Caco-2 (cell line): ENCODE measurements at regions of chr6 and their contacts with region 1.

Region 1: GRCh38 chr6:28160233-28160632 is 18.6 kb downstream of the ZKSCAN8 start:
- DNase-seq: no peak
- H3K4me3 ChIP-seq: no peak overlapping the region
- H3K4me3 Mint-ChIP-seq: no peak overlapping the region
- H3K27ac Mint-ChIP-seq: no peak overlapping the region
- H3K4me1 ChIP-seq: no peaks in the 10 kb centered on the region
- H3K4me1 Mint-ChIP-seq: no peaks in the 10 kb centered on the region
- H3K27me3 ChIP-seq: no peaks in the 10 kb centered on the region
- H3K27me3 Mint-ChIP-seq: no peaks in the 10 kb centered on the region
- CTCF ChIP-seq: no peak

Region 2: DNA sequence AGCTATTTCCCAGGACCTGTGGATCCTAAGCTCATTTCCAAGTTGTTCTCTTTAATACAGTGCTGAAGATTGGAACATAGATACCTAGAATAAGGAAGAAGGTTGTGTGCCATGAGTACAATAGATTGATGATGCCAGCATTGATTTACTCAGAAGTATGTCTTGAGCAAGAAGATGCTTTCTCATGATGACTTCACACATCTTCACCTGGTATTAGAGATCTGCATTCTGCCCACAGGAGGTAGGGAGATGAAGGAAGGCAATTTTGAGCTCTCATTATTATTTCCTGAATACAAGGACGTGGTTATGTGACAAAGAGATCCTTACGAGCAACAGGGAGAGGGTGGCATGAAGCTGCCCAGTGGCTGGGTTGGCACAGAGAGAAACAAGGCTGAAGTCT is 99.8 kb before region 1 on chr6:
- CTCF ChIA-PET with region 1: no interaction called
- POLR2A ChIA-PET with region 1: interaction called, 10 read pairs
- intact Hi-C with region 1: no loop called
- DNase-seq: no peak
- H3K4me3 ChIP-seq: no peak overlapping the region
- H3K4me3 Mint-ChIP-seq: no peak overlapping the region
- H3K27ac Mint-ChIP-seq: no peak overlapping the region
- H3K4me1 ChIP-seq: no peaks in the 10 kb centered on the region
- H3K4me1 Mint-ChIP-seq: no peaks in the 10 kb centered on the region
- H3K27me3 ChIP-seq: no peaks in the 10 kb centered on the region
- H3K27me3 Mint-ChIP-seq: peaks cover 2% of the 10 kb centered on the region
- CTCF ChIP-seq: no peak

Region 3: GRCh38 chr6:28080631-28081485 is 79.4 kb before region 1 on chr6:
- CTCF ChIA-PET with region 1: no interaction called
- POLR2A ChIA-PET with region 1: no interaction called
- intact Hi-C with region 1: no loop called
- DNase-seq: peak; percentile 92 to 93
- H3K4me3 ChIP-seq: peak overlapping the region; percentile 58
- H3K4me3 Mint-ChIP-seq: peak overlapping the region; percentile 74
- H3K27ac Mint-ChIP-seq: peak overlapping the region; percentile 92
- H3K4me1 ChIP-seq: peaks cover 3% of the 10 kb centered on the region; the same call in 1 of the 2 replicates
- H3K4me1 Mint-ChIP-seq: peaks cover 16% of the 10 kb centered on the region
- H3K27me3 ChIP-seq: no peaks in the 10 kb centered on the region
- H3K27me3 Mint-ChIP-seq: no peaks in the 10 kb centered on the region
- CTCF ChIP-seq: no peak